ENCODE measurements at regions of chr15 and their contacts with region 1.

Region 1: DNA sequence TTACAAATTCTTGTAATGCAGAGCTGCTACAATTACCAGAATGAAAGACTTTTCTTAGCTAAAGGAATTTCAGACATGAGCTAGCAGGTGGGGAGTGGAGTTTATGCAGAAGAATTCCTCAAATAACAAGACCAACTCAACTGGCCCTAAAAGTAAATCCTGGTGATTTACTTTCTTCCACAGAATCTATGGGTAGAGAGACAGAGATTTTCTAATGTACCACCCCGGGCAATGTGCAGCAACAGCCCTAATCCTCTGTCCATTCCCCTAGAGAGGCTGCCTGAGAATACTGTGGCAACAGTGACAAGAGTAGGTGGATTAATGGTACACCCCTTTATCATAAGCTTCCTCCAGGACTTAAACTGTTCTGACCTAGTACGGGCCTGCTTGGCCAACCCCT is 55.2 kb downstream of the AQR start:
- DNase-seq: no peak
- H3K4me3 ChIP-seq: no peak overlapping the region
- H3K27ac ChIP-seq: no peak overlapping the region
- H3K4me1 ChIP-seq: no peaks in the 10 kb centered on the region
- H3K27me3 ChIP-seq: no peaks in the 10 kb centered on the region
- CTCF ChIP-seq: no peak
- POLR2A ChIP-seq: no peak

Region 2: DNA sequence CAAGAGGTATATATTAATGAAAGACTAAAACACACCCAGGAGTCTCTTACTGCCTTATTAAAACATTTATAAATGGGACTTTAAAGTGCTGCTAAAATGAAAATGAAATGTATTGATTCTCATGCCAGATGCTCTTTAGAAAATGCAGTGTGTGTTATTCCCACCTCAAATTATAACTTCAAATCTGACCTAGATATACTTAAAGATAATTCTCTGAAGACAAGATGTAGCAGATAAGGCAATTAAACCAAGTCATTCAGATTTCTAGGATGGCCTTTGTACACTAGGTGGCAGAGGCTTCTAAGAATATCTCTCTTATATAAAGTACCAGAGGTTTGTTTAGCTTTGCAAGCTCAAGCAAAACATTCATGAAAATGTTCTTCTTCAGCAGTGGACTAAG is 304.0 kb before region 1 on chr15:
- CTCF ChIA-PET with region 1: interaction called, 204 read pairs
- POLR2A ChIA-PET with region 1: no interaction called
- dilution Hi-C with region 1: no loop called
- intact Hi-C with region 1: no loop called
- DNase-seq: peak; percentile 39
- H3K4me3 ChIP-seq: no peak overlapping the region
- H3K27ac ChIP-seq: no peak overlapping the region
- H3K4me1 ChIP-seq: peaks cover 15% of the 10 kb centered on the region
- H3K27me3 ChIP-seq: no peaks in the 10 kb centered on the region
- CTCF ChIP-seq: peak in 1 of 2 donors; percentile 18
- POLR2A ChIP-seq: no peak

Region 3: DNA sequence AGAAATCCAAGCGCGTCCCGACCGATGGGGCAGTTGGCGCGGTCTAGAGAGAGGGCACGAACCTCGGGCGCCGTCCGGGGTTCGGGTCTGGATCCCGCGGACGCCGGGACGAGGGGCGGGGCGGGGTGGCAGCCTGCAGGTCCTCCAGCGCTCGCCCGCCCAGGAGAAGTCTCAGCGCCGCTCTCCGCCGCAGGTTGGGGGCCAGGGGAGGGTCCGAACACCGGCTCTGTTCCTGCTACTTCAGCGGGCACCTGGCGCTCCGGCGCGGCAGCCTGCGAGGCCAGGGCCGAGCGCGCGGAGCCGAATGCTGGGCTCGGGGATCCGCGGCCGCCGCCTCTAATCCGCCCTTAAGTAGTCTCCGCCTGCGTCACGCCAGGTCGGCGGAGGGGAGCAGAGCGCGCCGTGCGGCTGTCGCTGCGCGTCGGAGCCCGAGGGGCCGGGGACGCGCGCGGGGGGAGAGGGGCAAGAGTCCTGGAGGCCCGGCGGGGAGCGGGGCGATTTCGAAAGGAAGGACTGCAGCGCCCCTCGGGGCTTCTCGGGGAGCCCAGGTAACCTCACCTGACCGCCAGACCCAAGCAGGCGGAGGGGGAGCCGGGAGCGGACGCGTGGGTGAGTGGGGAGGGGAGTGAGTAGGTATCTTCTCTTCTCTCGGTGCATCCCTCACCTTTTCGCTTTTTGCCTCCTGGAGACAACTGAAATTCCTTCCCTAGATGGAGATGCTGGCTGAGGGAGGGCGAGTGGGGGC is 159.5 kb before region 1 on chr15 and contains the start of gene GJD2:
- CTCF ChIA-PET with region 1: no interaction called
- POLR2A ChIA-PET with region 1: no interaction called
- dilution Hi-C with region 1: no loop called
- intact Hi-C with region 1: no loop called
- DNase-seq: no peak
- H3K4me3 ChIP-seq: no peak within 1 kb of the TSS
- H3K27ac ChIP-seq: no peak within 1 kb of the TSS
- H3K4me1 ChIP-seq: no peaks in the 10 kb centered on the region
- H3K27me3 ChIP-seq: peaks cover 30 to 56% of the 10 kb centered on the region in 2 experiments
- CTCF ChIP-seq: no peak
- POLR2A ChIP-seq: no peak
- total RNA-seq, gene GJD2: not detected in 2 replicates

Region 4: GRCh38 chr15:34951993-34952392 is 37.7 kb after region 1 on chr15:
- CTCF ChIA-PET with region 1: no interaction called
- POLR2A ChIA-PET with region 1: no interaction called
- dilution Hi-C with region 1: no loop called
- intact Hi-C with region 1: no loop called
- DNase-seq: peak; percentile 83
- H3K4me3 ChIP-seq: no peak overlapping the region
- H3K27ac ChIP-seq: no peak overlapping the region
- H3K4me1 ChIP-seq: no peaks in the 10 kb centered on the region
- H3K27me3 ChIP-seq: no peaks in the 10 kb centered on the region
- CTCF ChIP-seq: no peak
- POLR2A ChIP-seq: no peak

Region 5: DNA sequence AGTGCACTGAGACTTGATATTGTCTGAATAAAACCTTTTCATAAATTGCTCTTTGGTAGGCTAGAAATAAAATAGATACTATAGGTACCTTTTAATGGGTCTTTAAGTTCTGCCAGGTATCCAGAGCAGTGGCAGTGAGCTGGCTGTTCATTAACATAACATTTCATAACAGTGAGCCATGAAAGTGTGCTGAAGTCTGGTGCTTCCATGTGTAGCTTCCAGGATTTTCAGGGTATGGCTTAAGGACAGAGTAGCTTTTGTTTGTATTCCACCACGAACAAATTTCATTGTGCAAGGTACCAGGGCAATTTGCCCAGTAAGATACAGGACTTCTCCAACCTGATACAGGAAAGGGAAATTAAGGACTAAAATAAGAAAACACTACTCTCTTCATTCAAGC is 295.5 kb after region 1 on chr15:
- CTCF ChIA-PET with region 1: no interaction called
- POLR2A ChIA-PET with region 1: no interaction called
- dilution Hi-C with region 1: no loop called
- intact Hi-C with region 1: no loop called
- DNase-seq: no peak
- H3K4me3 ChIP-seq: no peak overlapping the region
- H3K27ac ChIP-seq: no peak overlapping the region
- H3K4me1 ChIP-seq: no peaks in the 10 kb centered on the region
- H3K27me3 ChIP-seq: no peaks in the 10 kb centered on the region
- CTCF ChIP-seq: no peak
- POLR2A ChIP-seq: no peak

Measured in endothelial cell of umbilical vein (primary cell).